Activated CD4-positive, alpha-beta memory T cell treated with anti-CD3 and anti-CD28 coated beads for 36 hours (primary cell): ENCODE measurements at regions of chr13 and their contacts with region 1.

Region 1: GRCh38 chr13:108176685-108177274 is 38.6 kb downstream of the LIG4 start:
- DNase-seq: peak; percentile 67
- H3K4me3 Mint-ChIP-seq: no peak overlapping the region
- H3K27ac Mint-ChIP-seq: no peak overlapping the region
- H3K4me1 Mint-ChIP-seq: no peaks in the 10 kb centered on the region
- H3K27me3 Mint-ChIP-seq: no peaks in the 10 kb centered on the region

Region 2: GRCh38 chr13:108200781-108201398 is 24.1 kb after region 1 on chr13:
- CTCF ChIA-PET with region 1: interaction called, 3 read pairs
- POLR2A ChIA-PET with region 1: no interaction called
- intact Hi-C with region 1: loop called (anchors 2 kb)
- DNase-seq: no peak
- H3K4me3 Mint-ChIP-seq: no peak overlapping the region
- H3K27ac Mint-ChIP-seq: no peak overlapping the region
- H3K4me1 Mint-ChIP-seq: peaks cover 21% of the 10 kb centered on the region
- H3K27me3 Mint-ChIP-seq: peaks cover 27% of the 10 kb centered on the region